ENCODE measurements at regions of chr10 and their contacts with region 1.

Region 1: DNA sequence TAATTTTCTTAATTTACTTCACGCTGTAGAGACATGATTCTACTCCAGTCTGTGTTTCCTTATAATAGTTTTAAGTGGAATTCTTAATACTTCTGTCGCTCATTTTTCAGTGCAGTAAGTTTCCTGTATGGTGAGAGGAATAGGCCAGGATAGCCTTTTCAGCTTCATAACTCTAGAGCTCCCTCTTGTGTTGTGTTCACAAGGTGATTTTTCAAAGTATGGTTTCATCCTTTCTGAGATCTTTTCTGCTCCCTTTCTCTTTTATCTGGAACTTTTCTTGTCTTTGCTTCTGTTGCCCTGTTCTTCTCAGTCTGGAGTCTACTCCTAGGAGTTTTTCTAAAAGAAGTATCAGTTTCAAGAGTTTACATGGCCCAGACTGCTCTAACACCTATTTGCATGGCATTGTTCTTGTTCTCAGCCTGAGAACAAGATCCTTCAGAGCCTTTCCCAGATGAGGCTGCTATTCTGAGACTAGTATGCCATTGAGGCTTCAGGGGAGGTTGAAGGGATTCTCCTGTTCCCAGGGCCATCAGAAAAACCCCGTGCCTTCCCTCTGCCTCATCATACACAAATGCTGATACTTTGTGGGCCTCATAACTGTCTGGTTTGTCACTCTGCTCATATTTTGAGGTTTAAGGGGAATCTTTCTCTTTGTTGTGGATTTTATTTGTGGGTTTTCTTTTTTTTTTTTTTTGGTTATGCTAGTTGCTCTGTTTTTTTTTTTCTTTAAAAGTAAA is 21.8 kb downstream of the NET1 start:
- DNase-seq: no peak
- H3K4me3 ChIP-seq: no peak overlapping the region
- CTCF ChIP-seq: no peak
- POLR2A ChIP-seq: no peak

Region 2: DNA sequence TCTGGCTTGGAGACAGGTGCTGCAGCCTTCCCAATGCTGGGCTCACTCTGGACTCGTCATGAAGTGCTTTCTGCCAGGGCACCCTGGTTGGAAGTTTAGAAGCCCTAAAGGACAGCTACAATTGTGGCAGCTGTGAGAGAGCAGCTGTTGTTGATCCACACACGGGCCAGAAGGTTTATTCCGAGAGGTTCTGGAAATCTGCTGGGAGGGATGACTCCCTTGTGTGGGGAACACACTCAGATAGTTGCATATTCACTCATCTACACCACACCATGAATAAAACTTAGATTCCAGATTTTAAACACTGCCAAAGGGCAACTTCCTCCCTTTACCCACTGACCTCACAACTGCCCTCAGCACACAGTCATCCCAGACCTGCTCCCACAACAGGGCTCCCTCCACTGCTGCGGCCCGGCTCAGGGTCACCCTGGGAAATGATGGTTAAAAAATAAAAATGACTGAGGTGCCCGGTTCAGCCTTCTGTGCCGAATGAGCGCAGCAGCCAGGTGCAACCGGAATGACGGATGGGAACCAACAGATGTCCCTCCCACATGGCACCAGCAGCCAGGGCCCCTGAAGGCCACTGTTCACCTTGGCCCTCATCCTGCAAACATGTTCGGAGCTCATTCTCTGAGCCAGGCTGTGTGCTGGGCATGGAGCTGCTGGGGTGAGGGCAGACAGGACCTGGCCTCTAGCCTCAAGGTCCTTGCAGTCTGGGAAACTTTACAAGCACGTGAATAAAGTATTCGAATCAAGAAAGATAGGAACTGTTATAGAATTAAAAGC is 192.0 kb after region 1 on chr10:
- intact Hi-C with region 1: loop called (anchors 2 kb)
- DNase-seq: no peak
- H3K4me3 ChIP-seq: no peak overlapping the region
- CTCF ChIP-seq: no peak
- POLR2A ChIP-seq: no peak

Region 3: DNA sequence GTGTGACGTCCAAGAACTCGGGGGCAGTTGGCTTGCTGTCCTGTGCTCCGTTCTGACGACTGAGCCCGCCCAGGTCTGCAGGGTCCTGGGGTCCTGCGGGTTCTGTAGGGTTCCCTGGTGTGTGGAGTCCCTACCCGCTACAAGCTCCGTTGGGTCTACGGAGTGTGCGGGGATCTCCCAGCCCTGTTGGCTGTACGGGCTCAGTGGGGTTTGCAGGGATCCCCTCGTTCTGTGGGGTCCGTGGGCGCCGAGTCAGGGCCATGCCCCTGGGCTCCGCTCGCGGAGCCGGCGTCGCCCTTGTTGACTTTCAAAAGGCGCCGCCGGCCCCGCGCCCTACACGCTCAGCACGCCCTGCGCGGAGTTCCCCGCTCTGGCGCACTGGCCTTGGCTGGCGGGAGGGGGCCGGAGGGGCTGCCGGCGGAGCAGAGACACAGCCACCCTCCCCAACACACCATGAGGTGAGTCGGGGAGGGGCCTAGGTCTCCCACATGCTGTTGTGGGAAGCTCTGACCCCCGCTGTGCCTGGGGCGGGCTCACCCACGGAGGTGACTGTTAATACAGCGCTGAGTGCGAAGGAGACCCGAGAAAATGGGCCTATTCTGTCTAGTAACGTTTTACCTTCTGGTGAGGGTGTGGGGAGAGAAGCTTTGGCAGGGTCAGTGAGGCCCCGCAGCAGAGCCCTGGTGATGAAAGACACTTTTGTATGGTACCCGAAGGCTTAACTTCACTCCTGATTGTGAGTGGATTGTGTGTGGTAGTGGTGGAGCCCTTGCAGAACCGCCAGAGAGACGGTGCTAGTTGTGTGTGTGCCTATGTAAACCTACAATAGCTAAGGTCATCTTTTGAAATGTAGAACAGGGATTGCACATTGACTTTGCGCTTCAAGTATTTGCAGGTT is 258.5 kb after region 1 on chr10:
- intact Hi-C with region 1: no loop called
- DNase-seq: no peak
- H3K4me3 ChIP-seq: peak overlapping the region; percentile 8
- CTCF ChIP-seq: no peak
- POLR2A ChIP-seq: no peak